MCF 10A (cell line): ENCODE measurements at regions of chr1 and their contacts with region 1.

Region 1: GRCh38 chr1:84913555-84913892 is 20.5 kb upstream of the LPAR3 start:
- DNase-seq: peak; percentile 58
- H3K4me3 Mint-ChIP-seq: no peak overlapping the region
- H3K27ac Mint-ChIP-seq: no peak overlapping the region
- H3K4me1 Mint-ChIP-seq: peaks cover 16% of the 10 kb centered on the region
- H3K27me3 Mint-ChIP-seq: no peaks in the 10 kb centered on the region
- CTCF ChIP-seq: no peak

Region 2: DNA sequence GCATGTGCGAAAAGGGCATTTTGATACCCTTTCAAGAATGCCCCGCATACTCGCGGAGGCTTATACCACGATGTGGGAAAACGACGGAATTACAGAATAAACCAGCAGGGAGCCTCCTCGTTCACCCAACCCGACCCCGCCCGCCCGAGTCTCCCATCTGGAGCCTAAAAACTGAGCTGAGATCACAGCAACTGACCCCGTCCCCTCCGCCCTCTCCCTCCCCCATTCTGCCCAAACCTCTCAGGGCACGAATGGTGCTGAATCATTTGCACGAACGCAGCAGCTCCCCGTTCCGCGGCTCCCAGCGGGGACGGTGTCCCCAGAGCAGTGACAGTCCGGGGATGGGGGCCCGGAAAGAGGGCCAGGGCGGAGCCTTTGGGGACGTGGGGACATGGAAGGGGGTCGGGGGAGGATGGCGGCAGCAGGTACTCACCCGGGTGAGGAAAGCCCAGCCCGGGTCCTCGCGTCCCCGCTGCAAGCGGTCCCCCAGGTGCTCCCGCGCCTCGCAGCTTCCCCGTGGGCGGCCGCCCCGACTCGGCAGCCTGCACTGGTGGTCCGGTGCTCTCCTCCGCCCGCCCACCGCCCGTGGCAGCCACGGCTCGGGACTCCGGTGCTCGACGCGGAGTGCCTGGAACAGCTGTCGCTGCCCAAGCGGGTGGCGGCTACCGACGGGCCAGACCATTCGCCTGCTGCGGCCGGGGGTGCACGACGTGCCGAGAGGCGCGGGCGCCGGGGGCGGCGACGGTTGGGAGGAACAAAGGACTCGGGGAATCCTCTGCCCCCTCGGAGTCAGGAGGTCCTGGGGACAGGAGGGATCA is 914.8 kb before region 1 on chr1 and contains the start of gene TTLL7:
- CTCF ChIA-PET with region 1: no interaction called
- POLR2A ChIA-PET with region 1: no interaction called
- intact Hi-C with region 1: no loop called
- DNase-seq: peak; percentile 32
- H3K4me3 Mint-ChIP-seq: peak within 1 kb of the TSS; percentile 79
- H3K27ac Mint-ChIP-seq: peak within 1 kb of the TSS; percentile 85
- H3K4me1 Mint-ChIP-seq: no peaks in the 10 kb centered on the region
- H3K27me3 Mint-ChIP-seq: no peaks in the 10 kb centered on the region
- CTCF ChIP-seq: no peak
- total RNA-seq, gene TTLL7: 2.0 and 2.7 TPM in 2 replicates

Region 3: DNA sequence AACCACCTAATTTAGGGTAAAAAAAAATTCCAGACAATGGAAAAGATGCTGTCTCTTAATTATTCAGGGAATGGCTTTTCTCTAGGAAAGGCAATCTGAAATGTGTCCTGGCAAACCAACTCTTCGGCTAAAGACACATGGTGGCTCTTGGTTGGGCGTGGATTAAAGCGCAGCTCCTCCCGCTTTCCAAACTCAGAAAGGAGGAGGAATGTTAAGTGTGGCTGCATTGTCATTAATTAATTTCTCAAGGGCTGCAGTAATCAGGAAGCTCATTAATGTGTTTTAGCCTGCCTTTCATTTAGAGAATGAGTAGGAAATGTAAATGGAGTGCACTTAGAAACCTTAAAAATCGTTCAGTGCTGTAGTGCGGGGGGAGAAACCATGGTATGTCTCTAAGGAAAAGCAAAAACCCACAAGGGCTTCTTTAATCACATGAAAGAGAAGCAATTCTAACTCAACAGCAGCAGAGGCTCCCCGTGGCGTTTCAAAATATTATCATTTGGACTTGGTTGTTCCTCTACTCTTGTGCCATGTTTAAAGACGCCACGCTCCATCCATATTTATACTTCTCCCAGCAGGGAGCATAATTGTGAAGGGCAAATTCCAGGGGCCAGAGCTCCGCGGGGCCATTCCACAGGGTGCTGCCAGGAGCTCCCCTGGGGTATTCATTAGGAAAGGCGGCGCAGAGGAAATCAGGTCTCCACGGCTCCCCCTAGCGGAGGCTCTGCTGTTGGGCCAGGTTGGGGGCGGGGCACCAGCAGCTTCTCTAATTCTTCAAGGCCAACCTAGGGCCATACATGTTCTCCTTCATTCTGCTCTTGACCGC is 131.4 kb before region 1 on chr1:
- CTCF ChIA-PET with region 1: no interaction called
- POLR2A ChIA-PET with region 1: no interaction called
- intact Hi-C with region 1: loop called (anchors 5 kb)
- DNase-seq: peak; percentile 58
- H3K4me3 Mint-ChIP-seq: no peak overlapping the region
- H3K27ac Mint-ChIP-seq: no peak overlapping the region
- H3K4me1 Mint-ChIP-seq: peaks cover 13% of the 10 kb centered on the region
- H3K27me3 Mint-ChIP-seq: no peaks in the 10 kb centered on the region
- CTCF ChIP-seq: no peak

Region 4: DNA sequence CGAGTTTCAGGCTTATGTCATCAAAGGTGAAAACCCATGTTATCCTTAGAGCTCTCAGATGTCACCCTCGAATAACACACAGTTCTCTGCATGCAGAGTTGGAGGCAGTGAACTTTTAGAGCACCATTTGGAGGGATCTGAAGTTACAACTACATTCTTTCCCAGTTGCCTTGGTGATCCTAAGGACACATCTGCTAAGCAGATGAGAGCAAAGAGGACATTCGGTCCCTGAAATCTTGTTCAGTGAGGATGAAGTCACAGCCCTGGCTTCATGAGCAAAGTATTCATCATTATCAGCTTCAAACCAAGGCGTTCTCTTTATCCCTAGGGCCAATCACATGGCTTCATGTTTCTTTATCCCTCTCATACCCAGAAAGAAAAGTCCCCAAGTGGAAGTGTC is 106.5 kb after region 1 on chr1:
- CTCF ChIA-PET with region 1: no interaction called
- POLR2A ChIA-PET with region 1: no interaction called
- intact Hi-C with region 1: no loop called
- DNase-seq: no peak
- H3K4me3 Mint-ChIP-seq: no peak overlapping the region
- H3K27ac Mint-ChIP-seq: no peak overlapping the region
- H3K4me1 Mint-ChIP-seq: no peaks in the 10 kb centered on the region
- H3K27me3 Mint-ChIP-seq: no peaks in the 10 kb centered on the region
- CTCF ChIP-seq: no peak